ENCODE measurements at regions of chr2 and their contacts with region 1.

Region 1: GRCh38 chr2:235045336-235045972 is 93.6 kb downstream of the SH3BP4 start:
- DNase-seq: peak; percentile 42
- ATAC-seq: peak; percentile 85
- H3K4me3 Mint-ChIP-seq: peak overlapping the region; percentile 70
- H3K27ac Mint-ChIP-seq: peak overlapping the region; percentile 79
- H3K4me1 Mint-ChIP-seq: peaks cover 46% of the 10 kb centered on the region
- H3K27me3 Mint-ChIP-seq: no peaks in the 10 kb centered on the region
- CTCF ChIP-seq: no peak

Region 2: GRCh38 chr2:234571620-234572407 is 473.6 kb before region 1 on chr2:
- CTCF ChIA-PET with region 1: no interaction called
- POLR2A ChIA-PET with region 1: no interaction called
- intact Hi-C with region 1: loop called (anchors 5 kb)
- DNase-seq: no peak
- ATAC-seq: peak; percentile 91
- H3K4me3 Mint-ChIP-seq: peak overlapping the region; percentile 36
- H3K27ac Mint-ChIP-seq: peak overlapping the region; percentile 73
- H3K4me1 Mint-ChIP-seq: peaks cover 79% of the 10 kb centered on the region
- H3K27me3 Mint-ChIP-seq: no peaks in the 10 kb centered on the region
- CTCF ChIP-seq: no peak

Region 3: GRCh38 chr2:234905547-234906265 is 139.7 kb before region 1 on chr2:
- CTCF ChIA-PET with region 1: no interaction called
- POLR2A ChIA-PET with region 1: no interaction called
- intact Hi-C with region 1: no loop called
- DNase-seq: no peak
- ATAC-seq: no peak
- H3K4me3 Mint-ChIP-seq: no peak overlapping the region
- H3K27ac Mint-ChIP-seq: no peak overlapping the region
- H3K4me1 Mint-ChIP-seq: no peaks in the 10 kb centered on the region
- H3K27me3 Mint-ChIP-seq: no peaks in the 10 kb centered on the region
- CTCF ChIP-seq: no peak

Region 4: DNA sequence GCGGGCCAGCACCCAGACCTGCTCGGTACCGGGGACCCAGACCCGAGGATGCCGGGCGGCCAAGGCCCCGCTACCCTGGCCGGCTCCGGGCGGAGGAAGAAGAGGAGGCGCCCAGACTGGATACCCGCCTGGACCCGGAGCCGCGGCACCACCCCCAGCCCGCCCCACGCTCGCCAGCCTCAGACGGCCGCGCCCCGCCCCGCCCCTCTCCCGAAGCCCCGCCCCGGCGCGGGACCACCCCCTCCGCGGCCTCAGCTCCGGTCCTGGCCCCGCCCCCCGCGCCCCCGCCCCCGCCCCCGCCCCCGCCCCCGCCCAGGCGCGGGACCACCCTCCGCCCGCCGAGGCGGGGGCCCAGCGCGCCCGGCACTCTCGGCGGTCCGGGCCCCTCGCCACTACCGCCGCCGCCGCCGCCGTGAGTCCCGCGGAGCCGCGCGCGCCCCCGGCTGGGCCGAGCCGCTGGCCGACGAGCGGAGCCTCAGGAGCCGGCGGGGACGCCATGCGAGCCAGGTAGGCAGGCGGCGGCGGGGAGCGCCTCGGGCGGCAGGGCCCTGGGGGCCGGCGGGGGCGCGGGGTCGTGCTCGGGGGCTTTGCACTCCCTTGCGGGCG is 93.7 kb before region 1 on chr2 and contains the start of gene SH3BP4:
- CTCF ChIA-PET with region 1: no interaction called
- POLR2A ChIA-PET with region 1: no interaction called
- intact Hi-C with region 1: loop called (anchors 5 kb)
- DNase-seq: peak; percentile 60
- ATAC-seq: peak; percentile 91
- H3K4me3 Mint-ChIP-seq: peak within 1 kb of the TSS; percentile 84
- H3K27ac Mint-ChIP-seq: peak within 1 kb of the TSS; percentile 30
- H3K4me1 Mint-ChIP-seq: peaks cover 15% of the 10 kb centered on the region
- H3K27me3 Mint-ChIP-seq: peaks cover 54% of the 10 kb centered on the region
- CTCF ChIP-seq: no peak
- total RNA-seq, gene SH3BP4: 0.76 and 1.1 TPM in 2 replicates

Region 5: DNA sequence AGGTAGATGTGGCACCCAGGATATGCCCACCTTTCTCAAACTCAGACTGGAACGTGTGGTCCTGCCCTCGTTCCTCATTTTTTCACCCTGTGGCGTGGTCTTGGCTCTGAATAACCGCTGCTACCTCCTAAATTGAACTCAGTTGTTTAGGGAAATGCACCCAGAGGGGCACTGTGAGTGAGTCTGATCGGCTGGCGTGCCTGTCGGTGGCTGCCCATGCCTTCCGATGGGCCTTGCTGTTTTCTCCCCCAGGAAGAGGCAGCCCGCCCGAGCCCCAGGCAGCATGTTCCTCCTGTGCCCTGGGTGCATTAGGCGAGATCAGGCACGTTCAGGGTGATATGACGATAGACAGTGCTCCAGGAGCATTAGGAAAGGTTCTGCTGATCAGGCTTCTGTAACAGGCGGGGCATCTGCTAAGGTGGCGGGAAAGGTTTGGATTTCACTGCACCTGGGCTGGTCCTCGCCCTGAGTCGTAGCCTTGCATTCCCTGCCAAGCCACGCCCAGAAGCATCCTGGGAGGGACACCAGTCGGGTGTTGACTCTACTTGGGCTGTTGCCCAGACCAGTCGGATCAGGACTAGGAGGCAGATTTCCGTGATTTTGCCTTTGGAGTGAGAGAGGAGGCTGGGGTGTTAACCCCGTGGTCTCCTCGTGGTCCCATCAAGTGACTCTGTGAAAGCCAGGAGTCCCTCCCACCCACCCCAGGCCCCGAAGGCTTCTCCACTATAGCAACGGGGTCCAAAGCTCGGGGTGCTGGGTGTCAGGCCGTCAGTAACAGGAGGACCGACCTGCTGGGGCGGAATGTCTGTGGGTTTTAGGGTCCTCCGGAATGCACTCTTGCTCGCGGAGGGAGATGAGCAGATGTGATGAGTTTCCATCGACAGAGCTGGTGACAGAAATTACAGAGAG is 18.6 kb before region 1 on chr2:
- CTCF ChIA-PET with region 1: no interaction called
- POLR2A ChIA-PET with region 1: no interaction called
- intact Hi-C with region 1: no loop called
- DNase-seq: no peak
- ATAC-seq: no peak
- H3K4me3 Mint-ChIP-seq: no peak overlapping the region
- H3K27ac Mint-ChIP-seq: no peak overlapping the region
- H3K4me1 Mint-ChIP-seq: no peaks in the 10 kb centered on the region
- H3K27me3 Mint-ChIP-seq: peaks cover 3% of the 10 kb centered on the region
- CTCF ChIP-seq: no peak

Region 6: GRCh38 chr2:235390103-235390812 is 344.8 kb after region 1 on chr2:
- CTCF ChIA-PET with region 1: no interaction called
- POLR2A ChIA-PET with region 1: no interaction called
- intact Hi-C with region 1: no loop called
- DNase-seq: no peak
- ATAC-seq: no peak
- H3K4me3 Mint-ChIP-seq: no peak overlapping the region
- H3K27ac Mint-ChIP-seq: no peak overlapping the region
- H3K4me1 Mint-ChIP-seq: no peaks in the 10 kb centered on the region
- H3K27me3 Mint-ChIP-seq: peaks cover 6% of the 10 kb centered on the region
- CTCF ChIP-seq: no peak

Measured in activated B cell treated with CpG ODN at 0.5 μM for 24 hours (primary cell).